Activated CD4-positive, alpha-beta T cell treated with anti-CD3 and anti-CD28 coated beads for 36 hours (primary cell): ENCODE measurements at regions of chr10 and their contacts with region 1.

Region 1: GRCh38 chr10:79322616-79323543 is 24.4 kb upstream of the PPIF start:
- DNase-seq: peak; percentile 91
- ATAC-seq: peak; percentile 75
- H3K4me3 Mint-ChIP-seq: peak overlapping the region; percentile 46
- H3K27ac Mint-ChIP-seq: peak overlapping the region; percentile 94
- H3K4me1 Mint-ChIP-seq: peaks cover 70% of the 10 kb centered on the region
- H3K27me3 Mint-ChIP-seq: no peaks in the 10 kb centered on the region

Region 2: DNA sequence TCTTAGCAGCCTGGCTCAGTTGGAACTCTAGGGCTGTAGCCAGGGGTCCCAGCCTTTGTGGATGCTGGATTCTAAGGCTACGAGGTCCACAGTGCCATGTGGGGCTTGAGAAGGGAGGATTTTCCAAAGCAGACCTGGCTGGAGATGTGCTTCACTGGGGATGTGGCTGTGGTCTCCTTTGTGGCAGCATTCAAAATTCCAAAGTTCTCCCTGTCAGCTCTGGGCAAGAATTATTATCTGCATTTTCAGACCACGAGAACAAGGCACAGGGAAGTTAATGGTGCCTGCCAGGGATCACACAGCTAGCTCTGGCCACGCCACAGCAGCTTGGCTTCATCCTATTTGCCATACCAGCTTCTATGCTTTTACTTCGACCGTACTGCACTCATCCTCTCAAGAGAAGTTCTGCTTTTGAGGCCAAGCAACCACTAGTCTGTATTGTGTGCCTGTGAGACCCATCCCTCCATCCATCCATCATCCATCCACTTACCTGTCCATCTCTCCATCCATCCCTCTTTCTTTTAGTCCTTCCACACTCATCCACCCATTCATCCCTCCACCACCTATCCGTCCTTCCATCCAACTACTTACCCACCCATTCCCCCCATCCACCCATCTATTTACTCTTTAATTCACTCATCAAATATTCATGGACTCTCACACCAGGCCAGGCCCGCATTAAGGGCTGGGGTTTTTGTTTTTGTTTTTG is 182.6 kb before region 1 on chr10:
- CTCF ChIA-PET with region 1: no interaction called
- POLR2A ChIA-PET with region 1: no interaction called
- intact Hi-C with region 1: no loop called
- DNase-seq: no peak
- ATAC-seq: no peak
- H3K4me3 Mint-ChIP-seq: no peak overlapping the region
- H3K27ac Mint-ChIP-seq: no peak overlapping the region
- H3K4me1 Mint-ChIP-seq: peaks cover 42% of the 10 kb centered on the region
- H3K27me3 Mint-ChIP-seq: no peaks in the 10 kb centered on the region

Region 3: DNA sequence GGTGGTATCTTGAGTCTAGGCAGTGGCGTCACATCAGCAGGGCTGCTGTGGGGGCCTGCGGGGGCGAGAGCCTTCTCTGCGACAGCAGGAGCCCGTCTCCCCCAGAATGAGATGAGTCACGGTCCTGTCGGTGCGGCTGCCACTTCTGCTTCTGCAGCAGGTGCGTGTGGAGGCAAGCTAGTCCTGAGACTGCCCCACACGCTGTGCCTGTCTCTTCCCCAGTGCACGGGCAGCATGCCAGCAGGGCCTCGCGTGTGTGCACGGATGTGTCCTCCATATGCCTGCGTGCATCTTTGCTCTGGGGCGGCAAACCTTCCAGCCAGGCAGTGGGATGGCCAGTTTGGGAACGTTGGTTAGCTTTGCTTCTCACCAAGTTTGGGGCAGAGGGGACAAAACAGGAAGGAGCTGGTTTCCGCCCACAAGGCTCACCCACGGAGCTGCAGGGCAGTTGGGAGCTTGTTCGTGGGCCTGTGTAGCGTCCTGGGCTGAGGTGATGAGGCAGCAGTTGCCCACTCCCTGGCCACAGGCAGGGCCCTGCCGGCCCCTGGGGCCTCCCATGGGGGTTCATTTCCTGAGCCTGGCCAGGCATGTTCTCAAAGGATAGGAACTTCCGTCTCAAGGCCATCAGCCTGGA is 36.4 kb before region 1 on chr10:
- CTCF ChIA-PET with region 1: interaction called, 3 read pairs
- POLR2A ChIA-PET with region 1: interaction called, 4 read pairs
- intact Hi-C with region 1: loop called in 1 of 2 experiments (anchors 5 kb)
- DNase-seq: peak; percentile 92
- ATAC-seq: peak; percentile 88
- H3K4me3 Mint-ChIP-seq: peak overlapping the region; percentile 37
- H3K27ac Mint-ChIP-seq: peak overlapping the region; percentile 85
- H3K4me1 Mint-ChIP-seq: peaks cover 41% of the 10 kb centered on the region
- H3K27me3 Mint-ChIP-seq: no peaks in the 10 kb centered on the region

Region 4: DNA sequence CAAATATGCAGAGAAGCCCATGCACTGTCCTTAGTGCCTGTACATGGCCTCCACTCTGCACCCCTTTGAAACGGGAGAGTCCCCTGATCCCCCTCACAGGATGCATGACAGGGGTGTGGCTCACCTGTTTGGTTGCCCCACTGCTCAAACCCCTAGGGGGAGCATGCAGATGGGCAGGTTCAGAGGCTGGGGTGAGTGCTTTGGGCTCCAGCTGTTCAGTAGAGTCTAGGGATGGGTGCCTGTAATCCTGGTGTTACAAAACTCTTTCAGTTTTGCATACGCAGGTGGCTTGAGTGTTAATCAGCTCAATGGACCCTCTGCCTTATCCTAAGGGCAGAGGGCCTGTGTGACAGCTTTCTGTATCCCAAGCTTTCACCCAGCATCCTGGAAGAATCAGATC is 280.1 kb after region 1 on chr10:
- CTCF ChIA-PET with region 1: no interaction called
- POLR2A ChIA-PET with region 1: no interaction called
- intact Hi-C with region 1: no loop called
- DNase-seq: no peak
- ATAC-seq: no peak
- H3K4me3 Mint-ChIP-seq: no peak overlapping the region
- H3K27ac Mint-ChIP-seq: no peak overlapping the region
- H3K4me1 Mint-ChIP-seq: no peaks in the 10 kb centered on the region
- H3K27me3 Mint-ChIP-seq: peaks cover 4% of the 10 kb centered on the region